ENCODE measurements at regions of chr1 and their contacts with region 1.

Region 1: GRCh38 chr1:246689409-246690008 is 34.7 kb upstream of the SCCPDH start:
- DNase-seq: peak; percentile 49
- ATAC-seq: peak; percentile 87
- H3K4me3 Mint-ChIP-seq: no peak overlapping the region
- H3K27ac Mint-ChIP-seq: no peak overlapping the region
- H3K4me1 Mint-ChIP-seq: no peaks in the 10 kb centered on the region
- H3K27me3 Mint-ChIP-seq: peaks cover 9% of the 10 kb centered on the region; the same call in 1 of the 2 replicates
- CTCF ChIP-seq: peak; percentile 47

Region 2: DNA sequence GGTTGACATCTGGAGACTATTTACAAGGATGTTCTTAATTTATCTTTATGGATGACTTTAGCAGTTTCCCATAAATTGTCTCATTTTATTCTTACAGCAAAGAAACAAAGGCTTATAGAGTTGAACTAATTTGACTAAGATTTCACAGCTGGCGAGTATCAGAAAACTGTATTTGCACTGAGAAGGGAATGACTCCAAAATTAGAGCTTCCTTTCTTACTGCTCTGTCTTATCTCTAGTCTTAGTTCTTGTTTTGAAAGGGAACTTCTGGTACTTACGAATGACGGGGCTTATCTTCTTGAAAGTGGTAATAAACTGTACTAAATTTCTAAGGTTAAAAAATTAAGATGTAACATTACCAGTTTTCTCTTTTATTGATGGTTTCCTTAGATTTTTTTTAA is 109.7 kb before region 1 on chr1:
- CTCF ChIA-PET with region 1: no interaction called
- POLR2A ChIA-PET with region 1: no interaction called
- DNase-seq: no peak
- ATAC-seq: no peak
- H3K4me3 Mint-ChIP-seq: no peak overlapping the region
- H3K27ac Mint-ChIP-seq: no peak overlapping the region
- H3K4me1 Mint-ChIP-seq: no peaks in the 10 kb centered on the region
- H3K27me3 Mint-ChIP-seq: no peaks in the 10 kb centered on the region
- CTCF ChIP-seq: no peak

Region 3: GRCh38 chr1:246724016-246724730 is 34.7 kb after region 1 on chr1 and contains the start of gene SCCPDH:
- CTCF ChIA-PET with region 1: interaction called, 17 read pairs
- POLR2A ChIA-PET with region 1: no interaction called
- DNase-seq: peak; percentile 69
- ATAC-seq: peak; percentile 90
- H3K4me3 Mint-ChIP-seq: peak within 1 kb of the TSS; percentile 82
- H3K27ac Mint-ChIP-seq: no peak within 1 kb of the TSS
- H3K4me1 Mint-ChIP-seq: peaks cover 7% of the 10 kb centered on the region; the same call in 1 of the 2 replicates
- H3K27me3 Mint-ChIP-seq: peaks cover 37% of the 10 kb centered on the region
- CTCF ChIP-seq: no peak
- total RNA-seq, gene SCCPDH: 10.9 to 13.0 TPM (median 12.4 TPM) in 3 replicates

Region 4: DNA sequence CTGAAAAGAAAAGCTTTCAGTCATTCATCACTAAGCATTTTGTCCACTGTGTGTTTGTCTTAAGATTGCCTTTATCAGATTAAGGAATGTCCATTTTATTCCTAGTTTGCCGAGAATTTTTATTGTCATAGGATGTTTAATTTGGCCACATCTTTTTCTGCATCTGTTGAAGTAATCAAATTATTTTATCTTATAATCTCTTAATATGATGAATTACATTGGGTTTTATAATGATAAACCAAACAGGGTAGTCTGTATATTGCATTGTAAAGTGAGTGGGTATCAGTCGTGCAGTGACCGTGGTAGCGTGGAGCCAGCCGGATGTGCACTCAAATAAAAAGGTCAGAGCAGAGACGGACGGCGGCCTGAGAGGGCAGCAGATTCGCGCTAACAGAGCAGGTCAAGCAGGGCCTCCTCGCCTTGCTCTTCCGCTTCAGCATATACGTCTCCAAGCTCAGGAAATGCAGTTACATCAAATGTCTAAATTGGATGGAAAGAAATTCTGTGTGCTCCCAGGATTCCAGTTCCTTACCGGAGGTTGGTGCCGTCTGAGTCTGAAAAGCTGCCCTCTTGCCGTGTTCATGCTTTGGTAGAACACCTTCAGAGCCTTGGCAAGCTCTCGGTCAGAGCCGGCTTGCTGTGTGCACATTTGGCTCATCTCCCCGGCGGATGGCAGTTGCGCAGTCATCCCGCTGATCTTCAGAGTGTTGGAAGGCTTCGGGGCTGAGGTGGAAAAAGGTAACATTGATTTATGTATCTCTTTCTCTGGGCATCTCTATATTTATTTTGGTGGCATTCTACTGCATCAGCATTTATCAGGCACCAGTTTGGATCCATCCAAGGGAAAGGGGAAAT is 86.2 kb after region 1 on chr1:
- CTCF ChIA-PET with region 1: no interaction called
- POLR2A ChIA-PET with region 1: no interaction called
- DNase-seq: no peak
- ATAC-seq: no peak
- H3K4me3 Mint-ChIP-seq: no peak overlapping the region
- H3K27ac Mint-ChIP-seq: no peak overlapping the region
- H3K4me1 Mint-ChIP-seq: no peaks in the 10 kb centered on the region
- H3K27me3 Mint-ChIP-seq: no peaks in the 10 kb centered on the region
- CTCF ChIP-seq: no peak

Measured in WTC11 (cell line).